Right ventricle myocardium inferior (tissue), 1 donor: ENCODE measurements at regions of chrX and their contacts with region 1.

Region 1: DNA sequence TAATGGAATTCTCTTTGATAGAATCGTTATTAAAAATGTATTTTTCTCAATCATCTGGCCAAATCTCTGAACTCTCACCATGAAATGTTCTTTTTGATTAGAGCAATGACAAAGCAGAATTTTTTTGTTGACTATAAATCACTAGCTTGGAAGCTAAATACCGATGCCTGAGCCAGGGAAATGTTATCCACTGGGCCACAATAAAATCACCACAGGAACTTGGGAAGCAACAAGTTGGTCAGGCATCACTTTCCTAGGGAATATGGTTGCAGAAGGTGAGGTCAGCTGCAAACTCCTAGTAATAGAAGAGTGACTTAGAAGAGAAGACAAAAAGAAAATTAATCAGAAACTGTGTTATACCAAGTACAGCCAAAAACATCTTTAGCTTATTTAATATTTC is 60.6 kb upstream of the CFAP47 start:
- DNase-seq: no peak
- ATAC-seq: no peak

Region 2: DNA sequence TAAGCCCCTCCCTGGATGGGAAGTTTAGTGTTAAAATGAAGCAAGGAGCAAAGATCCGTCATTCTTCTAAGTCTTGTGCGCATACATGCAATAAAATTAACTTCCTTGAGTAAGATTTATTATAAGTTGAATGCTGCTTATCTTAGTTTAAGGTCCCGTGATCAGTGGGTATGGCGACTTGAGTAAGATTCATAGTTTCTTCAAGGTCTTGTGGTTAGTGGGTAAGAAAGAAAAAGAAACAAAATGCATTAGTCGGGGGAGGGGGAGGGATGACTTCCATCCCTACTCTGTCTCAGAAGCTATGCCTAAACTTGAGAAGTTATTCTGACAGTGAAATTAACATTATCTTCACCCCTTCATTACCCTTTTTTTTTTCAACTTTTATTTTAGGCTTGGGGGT is 188.0 kb before region 1 on chrX:
- intact Hi-C with region 1: no loop called
- DNase-seq: no peak
- ATAC-seq: no peak

Region 3: DNA sequence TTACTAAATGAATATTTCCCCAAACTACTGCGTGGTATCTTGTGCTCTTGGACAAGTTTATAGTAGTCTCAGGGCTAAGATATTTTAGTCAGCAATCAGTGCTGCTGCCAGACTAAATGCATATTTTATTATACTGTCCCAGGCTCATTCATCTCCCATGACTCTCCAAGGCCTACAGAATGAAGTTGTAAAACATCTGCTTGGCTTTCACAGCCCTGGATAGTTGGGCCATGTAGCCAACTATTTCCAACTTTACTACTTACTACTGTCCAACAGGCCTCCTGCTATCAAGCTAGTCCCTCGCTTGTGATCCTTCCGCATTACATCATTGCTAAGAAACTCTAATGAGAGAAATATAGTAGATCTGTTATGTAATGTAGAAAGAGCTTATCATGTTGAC is 29.4 kb before region 1 on chrX:
- intact Hi-C with region 1: loop called (anchors 1 kb)
- DNase-seq: no peak
- ATAC-seq: no peak

Region 4: DNA sequence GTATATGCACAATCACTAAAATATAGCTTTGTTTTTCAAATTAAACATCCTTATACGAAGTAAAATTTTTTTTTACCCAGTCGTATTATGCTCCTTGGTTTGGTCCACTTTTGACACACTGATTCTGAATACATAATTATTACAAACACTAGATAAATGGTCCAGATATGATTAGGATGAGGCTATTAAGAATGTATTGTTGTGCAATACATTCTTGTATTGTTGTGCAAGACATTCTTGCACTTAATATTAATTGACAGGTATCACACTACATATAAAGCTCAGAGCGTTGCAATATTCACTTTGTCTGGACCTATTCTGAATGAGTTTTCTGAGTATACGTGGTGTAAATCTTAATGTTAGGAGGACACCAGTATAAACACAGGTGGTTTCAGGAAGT is 524.6 kb after region 1 on chrX:
- intact Hi-C with region 1: no loop called
- DNase-seq: no peak
- ATAC-seq: no peak